PC-3 (cell line): ENCODE measurements at regions of chr13 and their contacts with region 1.

Region 1: DNA sequence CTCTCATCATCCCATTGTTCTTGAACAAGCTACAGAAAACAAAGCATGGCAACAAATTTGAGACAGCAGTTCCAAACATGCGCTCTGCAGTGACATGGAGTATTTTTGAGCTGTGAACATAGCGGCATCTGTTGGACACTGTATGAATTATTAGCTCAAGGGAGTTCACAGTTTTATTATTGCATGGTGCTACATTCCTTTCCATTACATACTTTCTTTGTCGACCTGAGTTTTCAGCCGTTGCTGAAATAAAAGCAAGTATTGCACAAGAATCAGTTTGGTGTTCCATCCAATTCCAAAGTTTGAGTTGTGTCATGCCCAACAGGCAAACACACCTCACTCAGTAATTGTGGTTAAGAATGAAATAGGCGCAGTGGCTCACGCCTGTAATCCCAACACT is 30.1 kb upstream of the METTL21C start:
- DNase-seq: peak; percentile 56
- ATAC-seq: peak; percentile 79
- H3K4me3 ChIP-seq: no peak overlapping the region
- H3K27ac ChIP-seq: no peak overlapping the region
- H3K4me1 ChIP-seq: peaks cover 8% of the 10 kb centered on the region; the same call in 1 of the 2 replicates
- H3K27me3 ChIP-seq: no peaks in the 10 kb centered on the region
- CTCF ChIP-seq: peak; percentile 68

Region 2: DNA sequence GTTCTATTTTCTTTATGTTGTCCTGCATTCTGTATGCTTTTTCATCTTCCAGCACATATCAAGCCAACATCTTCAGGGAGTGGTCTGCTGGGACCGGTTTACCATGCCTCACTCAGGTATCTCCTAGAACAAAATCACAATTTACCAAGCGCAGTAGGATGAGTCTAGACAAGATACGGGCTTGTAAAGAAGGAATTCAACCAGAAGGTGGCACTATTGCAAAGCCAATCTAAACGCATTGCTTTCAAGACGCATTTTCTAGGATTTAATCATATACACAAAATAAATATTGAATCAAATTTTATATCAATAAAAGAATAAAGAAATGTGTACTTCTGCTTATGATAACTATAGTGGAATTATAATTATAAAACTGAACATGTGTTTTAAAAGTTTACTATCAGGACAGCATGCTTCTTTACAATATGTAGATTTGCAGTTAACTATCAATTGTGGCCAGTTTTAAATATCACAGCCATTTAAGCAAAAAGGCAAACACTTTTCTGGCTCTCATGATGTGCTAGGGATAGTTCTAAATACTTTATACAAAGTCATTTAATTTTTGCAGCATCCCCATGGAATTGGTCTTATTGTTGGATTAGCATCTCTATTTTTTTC is 144.3 kb before region 1 on chr13:
- CTCF ChIA-PET with region 1: interaction called, 4 read pairs
- POLR2A ChIA-PET with region 1: no interaction called
- intact Hi-C with region 1: loop called (anchors 1 kb)
- DNase-seq: peak; percentile 78
- ATAC-seq: peak; percentile 76
- H3K4me3 ChIP-seq: no peak overlapping the region
- H3K27ac ChIP-seq: no peak overlapping the region
- H3K4me1 ChIP-seq: no peaks in the 10 kb centered on the region
- H3K27me3 ChIP-seq: peaks cover 18% of the 10 kb centered on the region
- CTCF ChIP-seq: peak; percentile 69

Region 3: GRCh38 chr13:102596147-102597028 is 128.5 kb before region 1 on chr13 and contains the start of gene TPP2:
- CTCF ChIA-PET with region 1: interaction called, 14 read pairs
- POLR2A ChIA-PET with region 1: no interaction called
- intact Hi-C with region 1: loop called (anchors 1 kb)
- DNase-seq: peak; percentile 95
- ATAC-seq: peak; percentile 84
- H3K4me3 ChIP-seq: peak within 1 kb of the TSS; percentile 94
- H3K27ac ChIP-seq: peak within 1 kb of the TSS; percentile 82
- H3K4me1 ChIP-seq: peaks cover 19% of the 10 kb centered on the region; the same call in 1 of the 2 replicates
- H3K27me3 ChIP-seq: no peaks in the 10 kb centered on the region
- CTCF ChIP-seq: no peak
- total RNA-seq, gene TPP2: 16.1 and 30.4 TPM in 2 replicates

Region 4: DNA sequence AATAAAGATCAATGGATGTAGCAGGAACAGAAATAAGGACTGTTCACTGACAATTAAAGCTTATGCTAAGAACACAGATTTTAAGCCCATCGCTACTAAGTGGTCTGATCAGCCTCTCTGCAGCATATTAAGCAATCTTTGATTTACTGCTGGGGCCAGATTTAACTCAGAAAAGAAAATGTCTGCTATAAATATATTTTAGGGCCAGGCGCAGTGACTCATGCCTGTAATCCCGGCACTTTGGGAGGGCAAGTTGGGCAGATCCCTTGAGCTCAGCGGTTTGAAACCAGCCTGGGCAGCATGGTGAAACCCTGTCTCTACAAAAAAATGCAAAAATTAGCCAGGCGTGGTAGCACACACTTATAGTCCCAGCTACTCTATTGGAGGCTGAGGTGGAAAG is 73.0 kb before region 1 on chr13:
- CTCF ChIA-PET with region 1: no interaction called
- POLR2A ChIA-PET with region 1: no interaction called
- intact Hi-C with region 1: loop called (anchors 1 kb)
- DNase-seq: no peak
- ATAC-seq: no peak
- H3K4me3 ChIP-seq: no peak overlapping the region
- H3K27ac ChIP-seq: no peak overlapping the region
- H3K4me1 ChIP-seq: peaks cover 8% of the 10 kb centered on the region; the same call in 1 of the 2 replicates
- H3K27me3 ChIP-seq: no peaks in the 10 kb centered on the region
- CTCF ChIP-seq: no peak

Region 5: DNA sequence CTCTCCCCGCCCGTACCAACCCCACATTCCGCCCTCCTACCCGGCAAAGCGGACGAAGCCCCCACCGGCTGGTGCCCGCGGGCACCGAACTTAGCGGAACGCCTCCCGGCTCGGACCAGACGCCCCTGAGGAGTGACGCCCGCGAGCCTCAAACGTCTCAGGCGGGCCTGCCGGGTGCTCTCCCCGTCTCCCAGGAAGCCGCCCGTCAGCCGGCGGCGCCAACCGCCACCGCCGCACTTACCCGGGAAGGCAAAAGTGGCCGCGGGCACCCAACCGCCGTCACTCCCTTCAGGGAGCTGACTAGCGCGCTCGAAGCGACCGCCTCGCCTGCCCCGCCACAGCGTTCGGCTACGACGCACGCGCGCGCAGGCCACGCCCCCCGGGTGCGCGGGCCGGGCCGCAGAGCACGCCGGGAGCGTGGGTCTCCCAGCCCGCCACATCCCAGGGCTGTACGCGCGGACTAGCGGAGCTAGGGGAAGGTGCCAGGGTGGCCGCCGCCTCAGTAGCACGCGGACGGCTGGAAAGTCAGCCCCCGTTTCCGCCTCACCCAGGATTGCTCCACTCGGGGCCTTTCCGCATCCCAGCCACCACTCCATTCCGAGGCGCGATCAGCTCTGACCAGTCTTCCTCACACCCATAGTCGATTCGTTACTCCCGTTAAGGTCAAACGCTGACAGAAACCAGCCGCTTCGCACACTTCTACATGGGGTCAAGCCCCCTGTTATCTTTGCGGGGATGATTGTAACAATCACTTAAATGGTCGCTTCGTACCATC is 48.7 kb after region 1 on chr13 and contains the start of gene TEX30:
- CTCF ChIA-PET with region 1: interaction called, 3 read pairs
- POLR2A ChIA-PET with region 1: interaction called, 3 read pairs
- intact Hi-C with region 1: loop called (anchors 5 kb)
- DNase-seq: peak; percentile 84
- ATAC-seq: peak; percentile 96
- H3K4me3 ChIP-seq: peak within 1 kb of the TSS; percentile 92
- H3K27ac ChIP-seq: no peak within 1 kb of the TSS
- H3K4me1 ChIP-seq: peaks cover 17% of the 10 kb centered on the region
- H3K27me3 ChIP-seq: no peaks in the 10 kb centered on the region
- CTCF ChIP-seq: no peak
- total RNA-seq, gene TEX30: 15.3 and 16.7 TPM in 2 replicates

Region 6: GRCh38 chr13:102839462-102839861 is 114.5 kb after region 1 on chr13:
- CTCF ChIA-PET with region 1: no interaction called
- POLR2A ChIA-PET with region 1: no interaction called
- intact Hi-C with region 1: no loop called
- DNase-seq: no peak
- ATAC-seq: no peak
- H3K4me3 ChIP-seq: no peak overlapping the region
- H3K27ac ChIP-seq: no peak overlapping the region
- H3K4me1 ChIP-seq: no peaks in the 10 kb centered on the region
- H3K27me3 ChIP-seq: no peaks in the 10 kb centered on the region
- CTCF ChIP-seq: no peak